Left ventricle myocardium inferior (tissue), 1 donor: ENCODE measurements at regions of chr1 and their contacts with region 1.

Region 1: GRCh38 chr1:28466226-28466778 is 39.5 kb upstream of the RCC1 start:
- DNase-seq: no peak
- H3K4me3 ChIP-seq: no peak overlapping the region
- H3K27ac ChIP-seq: no peak overlapping the region
- H3K4me1 ChIP-seq: peaks cover 4% of the 10 kb centered on the region
- H3K27me3 ChIP-seq: no peaks in the 10 kb centered on the region
- CTCF ChIP-seq: no peak

Region 2: DNA sequence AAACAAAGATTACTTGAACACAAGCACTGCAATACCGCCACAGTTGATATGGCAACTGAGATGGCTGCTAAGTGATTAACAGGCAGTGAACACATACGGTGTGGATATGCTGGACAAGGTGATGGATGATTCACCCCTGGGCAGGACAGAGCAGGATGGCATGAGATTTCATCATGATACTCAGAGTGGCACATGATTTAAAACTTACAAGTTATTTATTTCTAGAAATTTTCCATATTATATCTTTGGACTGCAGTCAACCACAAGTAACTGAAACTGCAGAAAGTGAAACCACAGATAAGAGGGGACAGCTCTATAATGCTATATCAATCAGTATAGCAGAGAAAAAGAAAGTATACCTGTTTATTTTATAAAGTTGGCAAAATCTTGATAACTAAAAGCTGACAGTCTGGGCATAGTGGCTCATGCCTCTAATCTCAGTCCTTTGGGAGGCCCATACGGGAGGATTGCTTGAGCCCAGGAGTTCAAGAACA is 48.8 kb before region 1 on chr1:
- intact Hi-C with region 1: loop called (anchors 10 kb)
- DNase-seq: no peak
- H3K4me3 ChIP-seq: peak overlapping the region; percentile 9
- H3K27ac ChIP-seq: no peak overlapping the region
- H3K4me1 ChIP-seq: peaks cover 26% of the 10 kb centered on the region
- H3K27me3 ChIP-seq: no peaks in the 10 kb centered on the region
- CTCF ChIP-seq: no peak

Region 3: DNA sequence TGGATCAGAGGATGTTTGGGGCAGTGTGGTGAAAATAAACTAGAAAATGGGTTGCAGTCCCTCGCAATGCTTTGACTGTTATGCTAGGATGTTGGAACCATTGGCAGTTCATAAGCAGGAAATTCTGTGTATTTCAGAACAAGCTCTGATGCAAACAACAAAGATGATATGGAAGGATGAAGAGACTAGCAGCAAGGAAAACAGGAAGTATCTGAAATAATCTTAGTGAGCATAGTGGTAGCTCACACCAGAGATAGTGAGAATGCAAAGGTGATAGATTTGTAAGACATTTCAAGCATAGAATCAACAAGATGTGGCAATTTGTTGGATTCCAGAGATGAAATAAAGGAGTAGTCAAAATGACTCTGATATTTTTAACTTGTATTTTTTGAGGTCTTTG is 28.4 kb after region 1 on chr1:
- intact Hi-C with region 1: no loop called
- DNase-seq: no peak
- H3K4me3 ChIP-seq: no peak overlapping the region
- H3K27ac ChIP-seq: no peak overlapping the region
- H3K4me1 ChIP-seq: no peaks in the 10 kb centered on the region
- H3K27me3 ChIP-seq: no peaks in the 10 kb centered on the region
- CTCF ChIP-seq: no peak